CD4-positive, alpha-beta T cell (primary cell): ENCODE measurements at regions of chr4 and their contacts with region 1.

Region 1: GRCh38 chr4:121863799-121864198 is 6.5 kb downstream of the BBS7 start:
- DNase-seq: no peak
- ATAC-seq: no peak
- H3K4me3 ChIP-seq: no peak overlapping the region
- H3K4me3 Mint-ChIP-seq: no peak overlapping the region
- H3K27ac ChIP-seq: no peak overlapping the region
- H3K27ac Mint-ChIP-seq: no peak overlapping the region
- H3K4me1 ChIP-seq: no peaks in the 10 kb centered on the region
- H3K4me1 Mint-ChIP-seq: peaks cover 3% of the 10 kb centered on the region
- H3K27me3 ChIP-seq: no peaks in the 10 kb centered on the region
- H3K27me3 Mint-ChIP-seq: no peaks in the 10 kb centered on the region
- CTCF ChIP-seq: no peak

Region 2: DNA sequence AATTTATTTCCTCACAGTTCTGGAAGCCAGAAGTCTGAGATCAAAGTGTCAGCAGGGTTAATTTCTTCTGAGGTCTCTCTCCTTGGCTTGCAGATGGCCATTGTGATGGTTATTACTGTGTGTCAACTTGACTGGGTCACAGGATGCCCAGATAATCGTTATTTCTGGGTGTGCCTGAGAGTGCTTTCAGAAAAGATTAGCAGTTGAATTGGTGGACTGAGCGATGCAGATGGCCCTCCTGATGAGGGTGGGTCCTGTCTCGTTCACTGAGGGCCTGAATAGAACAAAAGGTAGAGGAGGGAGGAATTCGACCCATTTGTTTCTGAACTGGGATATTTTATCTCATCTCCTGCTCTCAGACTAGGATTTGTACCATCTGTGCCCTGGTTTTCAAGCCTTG is 114.6 kb before region 1 on chr4:
- CTCF ChIA-PET with region 1: no interaction called
- POLR2A ChIA-PET with region 1: no interaction called
- intact Hi-C with region 1: no loop called
- DNase-seq: no peak
- ATAC-seq: no peak
- H3K4me3 ChIP-seq: no peak overlapping the region
- H3K4me3 Mint-ChIP-seq: no peak overlapping the region
- H3K27ac ChIP-seq: no peak overlapping the region
- H3K27ac Mint-ChIP-seq: no peak overlapping the region
- H3K4me1 ChIP-seq: no peaks in the 10 kb centered on the region
- H3K4me1 Mint-ChIP-seq: no peaks in the 10 kb centered on the region
- H3K27me3 ChIP-seq: peaks cover 0 to 8% of the 10 kb centered on the region in 2 experiments
- H3K27me3 Mint-ChIP-seq: peaks cover 42% of the 10 kb centered on the region
- CTCF ChIP-seq: no peak

Region 3: DNA sequence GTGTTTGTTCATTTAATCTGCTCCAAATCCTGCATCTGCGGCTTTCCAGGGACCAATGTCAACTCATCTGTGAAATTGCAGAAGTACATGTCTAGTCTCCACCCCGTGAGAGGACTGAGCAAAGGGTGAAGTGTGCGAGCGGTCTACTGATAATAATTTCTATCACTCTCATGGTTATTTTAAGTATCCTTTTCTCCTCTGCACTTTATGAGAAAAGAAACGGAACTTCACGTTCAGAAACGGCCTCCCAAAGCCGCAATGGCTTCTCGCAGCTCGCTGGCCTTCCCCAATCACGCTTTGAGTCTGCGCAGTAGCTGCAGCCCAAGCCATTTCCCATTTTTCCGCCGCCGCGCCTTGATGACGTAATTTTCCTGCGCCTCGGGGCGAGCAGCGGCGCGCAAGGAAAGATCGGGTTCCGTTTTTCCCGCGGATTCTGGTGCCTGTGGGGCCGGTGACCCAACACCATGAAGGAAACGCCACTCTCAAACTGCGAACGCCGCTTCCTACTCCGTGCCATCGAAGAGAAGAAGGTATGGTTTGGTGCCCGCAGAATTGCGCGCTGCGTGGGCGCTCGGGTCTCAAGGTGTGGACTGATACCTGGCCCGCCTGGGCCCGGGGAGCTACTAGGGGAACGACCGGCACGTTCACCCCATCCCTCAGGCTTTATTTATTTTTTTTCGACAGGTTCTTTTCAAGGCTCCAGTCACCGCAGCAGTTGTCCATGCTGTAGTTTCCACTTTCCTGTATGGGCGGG is 62.7 kb before region 1 on chr4 and contains the start of gene EXOSC9:
- CTCF ChIA-PET with region 1: no interaction called
- POLR2A ChIA-PET with region 1: no interaction called
- intact Hi-C with region 1: no loop called
- DNase-seq: peak; percentile 88 to 97 (median 94)
- ATAC-seq: peak; percentile 87
- H3K4me3 ChIP-seq: peak within 1 kb of the TSS; percentile 95
- H3K4me3 Mint-ChIP-seq: peak within 1 kb of the TSS; percentile 96
- H3K27ac ChIP-seq: peak within 1 kb of the TSS; percentile 80 to 96
- H3K27ac Mint-ChIP-seq: peak within 1 kb of the TSS; percentile 100
- H3K4me1 ChIP-seq: peaks cover 13% of the 10 kb centered on the region
- H3K4me1 Mint-ChIP-seq: peaks cover 51% of the 10 kb centered on the region
- H3K27me3 ChIP-seq: no peaks in the 10 kb centered on the region
- H3K27me3 Mint-ChIP-seq: no peaks in the 10 kb centered on the region
- CTCF ChIP-seq: no peak
- total RNA-seq, gene EXOSC9: 71.6 to 72.7 TPM

Region 4: GRCh38 chr4:121842862-121843261 is 20.9 kb before region 1 on chr4:
- CTCF ChIA-PET with region 1: no interaction called
- POLR2A ChIA-PET with region 1: no interaction called
- intact Hi-C with region 1: loop called in 1 of 2 experiments (anchors 2 kb)
- DNase-seq: no peak
- ATAC-seq: no peak
- H3K4me3 ChIP-seq: no peak overlapping the region
- H3K4me3 Mint-ChIP-seq: no peak overlapping the region
- H3K27ac ChIP-seq: no peak overlapping the region
- H3K27ac Mint-ChIP-seq: no peak overlapping the region
- H3K4me1 ChIP-seq: no peaks in the 10 kb centered on the region
- H3K4me1 Mint-ChIP-seq: no peaks in the 10 kb centered on the region
- H3K27me3 ChIP-seq: no peaks in the 10 kb centered on the region
- H3K27me3 Mint-ChIP-seq: no peaks in the 10 kb centered on the region
- CTCF ChIP-seq: no peak